Activated CD8-positive, alpha-beta memory T cell treated with anti-CD3 and anti-CD28 coated beads, Interleukin-2, amount 10 ng/mL, durations not matched to agents 7 days and 5 days (primary cell): ENCODE measurements at regions of chr1 and their contacts with region 1.

Region 1: GRCh38 chr1:180168786-180169639 is 14.3 kb downstream of the QSOX1 start:
- DNase-seq: peak; percentile 56
- ATAC-seq: peak; percentile 87
- H3K4me3 Mint-ChIP-seq: no peak overlapping the region
- H3K27ac Mint-ChIP-seq: no peak overlapping the region
- H3K4me1 Mint-ChIP-seq: no peaks in the 10 kb centered on the region
- H3K27me3 Mint-ChIP-seq: no peaks in the 10 kb centered on the region

Region 2: GRCh38 chr1:179867807-179868330 is 301.1 kb before region 1 on chr1:
- CTCF ChIA-PET with region 1: interaction called, 27 read pairs
- DNase-seq: peak; percentile 61
- ATAC-seq: peak; percentile 86
- H3K4me3 Mint-ChIP-seq: no peak overlapping the region
- H3K27ac Mint-ChIP-seq: no peak overlapping the region
- H3K4me1 Mint-ChIP-seq: peaks cover 8% of the 10 kb centered on the region
- H3K27me3 Mint-ChIP-seq: no peaks in the 10 kb centered on the region